ENCODE measurements at regions of chr5 and their contacts with region 1.

Region 1: GRCh38 chr5:112551419-112552032 is 132.4 kb upstream of the EPB41L4A start:
- DNase-seq: peak; percentile 56
- H3K4me3 ChIP-seq: no peak overlapping the region
- CTCF ChIP-seq: peak; percentile 67

Region 2: DNA sequence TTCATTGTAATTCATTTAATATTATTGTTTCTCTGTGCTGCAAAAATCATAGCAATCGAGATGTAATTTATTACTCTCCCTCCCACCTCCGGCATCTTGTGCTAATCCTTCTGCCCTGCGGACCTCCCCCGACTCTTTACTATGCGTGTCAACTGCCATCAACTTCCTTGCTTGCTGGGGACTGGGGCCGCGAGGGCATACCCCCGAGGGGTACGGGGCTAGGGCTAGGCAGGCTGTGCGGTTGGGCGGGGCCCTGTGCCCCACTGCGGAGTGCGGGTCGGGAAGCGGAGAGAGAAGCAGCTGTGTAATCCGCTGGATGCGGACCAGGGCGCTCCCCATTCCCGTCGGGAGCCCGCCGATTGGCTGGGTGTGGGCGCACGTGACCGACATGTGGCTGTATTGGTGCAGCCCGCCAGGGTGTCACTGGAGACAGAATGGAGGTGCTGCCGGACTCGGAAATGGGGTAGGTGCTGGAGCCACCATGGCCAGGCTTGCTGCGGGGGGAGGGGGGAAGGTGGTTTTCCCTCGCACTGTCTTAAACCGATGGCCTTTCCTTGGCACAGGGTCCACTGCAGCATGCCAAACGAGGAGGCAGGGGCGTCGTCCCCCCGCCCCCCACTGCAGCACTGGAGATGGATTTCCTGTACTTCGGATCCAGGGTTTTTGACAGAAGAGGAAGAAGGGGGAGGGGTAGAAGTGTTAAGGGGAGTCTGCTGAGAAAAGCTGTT is 186.1 kb after region 1 on chr5 and contains the start of gene APC:
- in situ Hi-C with region 1: loop called (anchors 25 kb)
- DNase-seq: peak; percentile 75
- H3K4me3 ChIP-seq: peak within 1 kb of the TSS; percentile 72
- CTCF ChIP-seq: no peak